Activated CD8-positive, alpha-beta T cell treated with anti-CD3 and anti-CD28 coated beads for 36 hours (primary cell): ENCODE measurements at regions of chr1 and their contacts with region 1.

Region 1: DNA sequence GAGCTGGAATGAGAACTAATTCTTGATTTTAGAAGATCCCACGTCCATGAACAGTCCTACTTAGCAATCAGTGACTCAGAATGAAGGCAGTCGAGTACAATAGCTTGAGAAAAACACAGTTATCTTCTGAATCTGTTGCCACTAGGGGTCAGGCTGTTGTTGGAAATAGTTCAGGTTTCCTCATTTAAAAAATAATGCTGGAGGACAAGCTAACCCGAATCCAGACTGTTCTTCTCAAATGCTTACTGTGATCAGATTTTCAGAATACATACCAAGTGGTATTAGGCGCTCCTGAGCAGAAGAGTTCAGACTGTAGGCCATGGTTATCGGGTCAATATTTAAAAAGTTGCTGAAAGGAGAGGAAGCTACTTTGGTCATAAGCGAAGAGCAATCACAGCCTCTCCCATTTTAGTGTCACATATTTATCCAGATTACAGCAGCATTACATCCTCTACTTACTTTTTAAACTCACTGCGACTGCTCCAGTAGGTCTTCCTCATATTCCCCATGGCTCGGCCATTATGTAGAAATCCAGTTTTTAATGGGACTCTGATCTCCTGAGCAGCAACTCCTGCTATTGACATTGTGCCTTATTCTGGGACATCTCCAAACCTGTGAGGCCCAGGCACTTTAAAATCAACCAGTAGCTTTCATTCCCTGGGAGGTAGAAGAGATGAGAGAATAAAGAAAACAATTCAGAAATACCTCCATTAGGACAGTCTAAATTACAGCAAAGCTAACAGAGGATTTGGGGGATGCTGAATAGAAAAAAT is 10.9 kb downstream of the ERRFI1 start:
- DNase-seq: peak; percentile 58
- ATAC-seq: peak; percentile 64
- H3K4me3 Mint-ChIP-seq: no peak overlapping the region
- H3K27ac Mint-ChIP-seq: no peak overlapping the region
- H3K4me1 Mint-ChIP-seq: peaks cover 7% of the 10 kb centered on the region
- H3K27me3 Mint-ChIP-seq: peaks cover 18% of the 10 kb centered on the region
- CTCF ChIP-seq: peak; percentile 64

Region 2: DNA sequence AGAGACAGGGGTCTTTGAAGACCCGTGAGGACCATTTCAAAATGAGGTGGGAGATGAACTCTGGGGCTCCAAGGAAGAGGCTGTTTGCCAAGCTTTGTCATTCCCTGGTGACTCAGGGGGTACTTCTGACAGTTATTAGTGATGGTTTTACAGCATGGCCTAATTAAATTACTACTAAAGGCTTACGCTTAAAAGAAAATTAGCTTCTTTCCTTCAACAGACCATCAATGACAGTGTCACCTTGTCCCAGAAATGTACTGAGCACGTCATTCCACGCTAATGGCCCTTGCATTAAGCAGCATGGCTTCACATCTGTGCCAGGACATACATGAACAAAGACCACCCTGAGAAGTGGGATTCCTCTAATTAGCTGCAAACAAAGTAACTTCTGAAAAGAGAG is 157.2 kb before region 1 on chr1:
- CTCF ChIA-PET with region 1: no interaction called
- POLR2A ChIA-PET with region 1: no interaction called
- intact Hi-C with region 1: no loop called
- DNase-seq: no peak
- ATAC-seq: no peak
- H3K4me3 Mint-ChIP-seq: no peak overlapping the region
- H3K27ac Mint-ChIP-seq: no peak overlapping the region
- H3K4me1 Mint-ChIP-seq: peaks cover 2% of the 10 kb centered on the region
- H3K27me3 Mint-ChIP-seq: no peaks in the 10 kb centered on the region
- CTCF ChIP-seq: no peak

Region 3: DNA sequence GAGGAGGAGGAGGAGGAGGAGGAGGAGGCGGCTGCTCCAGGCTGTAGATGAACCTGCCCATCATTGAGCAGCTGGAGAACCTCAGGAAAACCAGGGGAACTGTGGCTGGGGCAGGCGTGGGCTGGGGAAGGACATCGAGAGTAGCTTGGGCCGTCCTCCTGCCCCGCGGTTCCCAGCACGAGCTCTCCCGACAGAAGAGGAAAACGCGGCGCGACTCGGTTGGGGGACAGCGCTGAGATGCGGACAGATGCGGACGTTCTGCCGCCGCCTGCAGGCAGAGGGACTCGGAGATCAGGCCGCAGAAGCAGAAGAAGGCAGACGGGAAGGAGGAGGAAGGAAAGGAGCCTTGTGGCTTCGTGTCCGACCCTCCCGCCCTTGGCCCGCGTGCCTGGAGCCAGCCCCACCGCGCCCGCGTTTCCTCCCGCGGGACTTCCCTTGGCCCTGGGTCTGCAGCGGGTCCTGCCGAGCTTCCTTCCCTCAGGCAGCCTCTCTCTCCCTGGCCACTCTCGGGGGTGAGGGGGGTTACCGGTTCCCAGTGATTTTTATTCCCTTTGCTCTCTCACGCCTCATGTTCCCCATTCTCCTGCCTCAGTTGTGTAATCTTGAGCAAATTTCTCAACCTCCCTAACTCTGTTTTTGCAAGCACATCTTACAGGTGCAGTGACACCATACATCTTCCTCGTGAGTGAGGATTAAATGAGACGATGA is 72.9 kb before region 1 on chr1:
- CTCF ChIA-PET with region 1: no interaction called
- POLR2A ChIA-PET with region 1: no interaction called
- intact Hi-C with region 1: no loop called
- DNase-seq: peak; percentile 53
- ATAC-seq: peak; percentile 18
- H3K4me3 Mint-ChIP-seq: peak overlapping the region; percentile 87
- H3K27ac Mint-ChIP-seq: peak overlapping the region; percentile 97
- H3K4me1 Mint-ChIP-seq: peaks cover 50% of the 10 kb centered on the region
- H3K27me3 Mint-ChIP-seq: no peaks in the 10 kb centered on the region
- CTCF ChIP-seq: no peak

Region 4: GRCh38 chr1:7983086-7983778 is 32.0 kb before region 1 on chr1:
- CTCF ChIA-PET with region 1: interaction called, 34 read pairs
- POLR2A ChIA-PET with region 1: no interaction called
- intact Hi-C with region 1: no loop called
- DNase-seq: no peak
- ATAC-seq: no peak
- H3K4me3 Mint-ChIP-seq: no peak overlapping the region
- H3K27ac Mint-ChIP-seq: no peak overlapping the region
- H3K4me1 Mint-ChIP-seq: peaks cover 13% of the 10 kb centered on the region
- H3K27me3 Mint-ChIP-seq: no peaks in the 10 kb centered on the region
- CTCF ChIP-seq: no peak

Region 5: GRCh38 chr1:8083739-8084484 is 68.7 kb after region 1 on chr1:
- CTCF ChIA-PET with region 1: interaction called, 12 read pairs
- POLR2A ChIA-PET with region 1: no interaction called
- intact Hi-C with region 1: no loop called
- DNase-seq: no peak
- ATAC-seq: no peak
- H3K4me3 Mint-ChIP-seq: no peak overlapping the region
- H3K27ac Mint-ChIP-seq: no peak overlapping the region
- H3K4me1 Mint-ChIP-seq: no peaks in the 10 kb centered on the region
- H3K27me3 Mint-ChIP-seq: peaks cover 5% of the 10 kb centered on the region
- CTCF ChIP-seq: no peak

Region 6: DNA sequence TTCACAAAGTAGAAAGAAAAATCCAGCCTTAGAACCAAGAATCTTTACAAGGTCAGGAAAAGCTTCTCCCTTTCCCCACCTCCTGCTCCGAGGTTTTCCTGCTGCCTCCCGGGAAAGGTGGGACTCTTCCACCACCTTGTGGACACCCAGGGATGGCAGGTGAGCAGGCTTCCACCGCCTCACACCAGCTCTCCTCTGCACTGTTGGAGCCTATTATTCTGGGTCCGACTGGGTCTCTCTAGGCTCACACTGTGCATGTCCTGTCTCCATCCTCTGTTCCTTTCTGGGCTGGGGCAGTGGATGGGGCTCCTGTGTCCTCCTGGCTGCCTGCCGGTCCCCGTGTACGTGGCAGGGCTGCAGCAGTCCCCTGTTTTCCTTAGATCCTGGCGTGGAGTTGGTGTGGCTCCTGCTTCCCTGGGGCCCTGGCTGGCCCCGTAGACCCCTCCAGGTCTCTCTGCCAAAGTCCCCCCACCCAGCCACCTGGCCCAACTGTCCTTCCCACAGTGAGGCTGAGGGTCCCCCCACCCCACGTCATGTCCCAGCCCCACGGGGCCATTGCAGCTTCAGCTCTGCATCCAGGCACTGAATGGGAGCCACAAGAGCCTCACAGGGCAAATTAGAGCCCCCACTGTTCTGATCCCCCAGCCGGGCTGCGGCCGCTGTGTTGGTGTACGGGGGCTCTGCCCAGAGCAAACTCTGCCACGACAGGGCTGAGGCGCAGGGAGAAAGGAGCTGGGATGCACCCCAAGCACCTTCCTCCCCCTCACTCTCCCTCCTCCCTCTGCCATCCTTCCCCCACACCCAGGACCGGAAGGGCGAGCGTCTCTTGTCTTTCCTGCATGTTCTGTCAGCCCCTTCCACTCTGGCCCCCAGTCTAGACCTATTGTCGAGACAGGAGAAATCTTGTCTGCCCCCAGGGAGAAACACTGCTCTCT is 299.4 kb after region 1 on chr1:
- CTCF ChIA-PET with region 1: interaction called, 61 read pairs
- POLR2A ChIA-PET with region 1: interaction called, 3 read pairs
- intact Hi-C with region 1: no loop called
- DNase-seq: peak; percentile 55
- ATAC-seq: peak; percentile 61
- H3K4me3 Mint-ChIP-seq: no peak overlapping the region
- H3K27ac Mint-ChIP-seq: no peak overlapping the region
- H3K4me1 Mint-ChIP-seq: peaks cover 7% of the 10 kb centered on the region
- H3K27me3 Mint-ChIP-seq: peaks cover 29% of the 10 kb centered on the region
- CTCF ChIP-seq: peak; percentile 79